Posterior vena cava (tissue), 2 donors: ENCODE measurements at regions of chr5 and their contacts with region 1.

Region 1: DNA sequence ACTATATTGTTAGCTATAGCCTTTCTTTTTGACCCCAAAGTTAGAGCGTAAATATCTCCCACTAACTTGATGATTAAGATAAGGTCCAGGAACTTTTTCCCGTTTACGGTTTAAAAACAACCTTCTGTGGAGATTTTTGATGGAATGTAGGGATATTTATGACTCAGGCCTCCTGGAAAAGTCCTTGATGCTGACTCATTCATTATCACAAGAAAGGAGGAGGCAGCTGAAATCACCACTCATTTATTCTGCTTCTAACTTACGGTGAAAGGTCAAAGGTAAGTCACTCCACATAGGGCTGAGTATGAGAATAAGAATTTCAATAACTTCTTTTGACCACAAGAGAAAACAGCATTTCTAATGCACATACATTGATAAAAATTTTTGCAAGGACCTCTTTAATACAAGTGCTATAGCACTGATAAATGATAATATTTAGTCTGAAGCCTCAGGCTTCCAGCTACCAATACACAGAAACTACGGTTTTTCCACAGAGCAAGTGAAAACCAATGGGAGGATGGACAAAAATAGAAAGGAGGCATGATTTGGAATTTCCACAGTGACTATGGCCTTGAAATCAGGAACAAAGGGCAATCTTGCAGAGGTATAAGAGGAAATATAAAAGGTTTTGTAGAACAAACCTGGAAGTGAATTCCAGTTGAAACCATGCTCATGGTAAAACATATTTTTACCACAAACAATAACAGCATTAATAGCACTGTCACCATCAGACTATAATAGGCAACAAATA is 146.5 kb downstream of the PPP2R2B start:
- DNase-seq: no peak

Region 2: GRCh38 chr5:146620669-146621051 is 111.4 kb before region 1 on chr5:
- intact Hi-C with region 1: no loop called
- DNase-seq: no peak

Region 3: GRCh38 chr5:146667633-146668272 is 64.3 kb before region 1 on chr5:
- intact Hi-C with region 1: no loop called
- DNase-seq: no peak

Region 4: DNA sequence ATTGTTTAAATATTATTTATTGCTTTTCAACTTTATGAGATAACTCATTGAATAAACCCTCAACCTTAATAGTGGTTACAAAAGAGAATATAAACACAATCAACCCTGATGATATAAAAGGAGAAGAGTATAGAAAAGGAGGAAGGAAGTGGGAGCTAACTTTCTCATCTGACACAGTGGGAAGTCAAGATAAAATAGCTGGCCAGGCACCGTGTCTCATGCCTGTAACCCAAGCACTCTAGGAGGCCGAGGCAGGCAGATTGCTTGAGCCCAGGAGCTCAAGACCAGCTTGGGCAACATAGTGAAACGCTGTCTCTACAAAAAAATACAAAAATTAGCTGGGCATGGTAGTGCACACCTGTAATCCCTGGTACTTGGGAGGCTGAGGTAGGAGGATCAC is 53.0 kb after region 1 on chr5:
- intact Hi-C with region 1: loop called in 1 of 2 experiments (anchors 10 kb)
- DNase-seq: no peak

Region 5: DNA sequence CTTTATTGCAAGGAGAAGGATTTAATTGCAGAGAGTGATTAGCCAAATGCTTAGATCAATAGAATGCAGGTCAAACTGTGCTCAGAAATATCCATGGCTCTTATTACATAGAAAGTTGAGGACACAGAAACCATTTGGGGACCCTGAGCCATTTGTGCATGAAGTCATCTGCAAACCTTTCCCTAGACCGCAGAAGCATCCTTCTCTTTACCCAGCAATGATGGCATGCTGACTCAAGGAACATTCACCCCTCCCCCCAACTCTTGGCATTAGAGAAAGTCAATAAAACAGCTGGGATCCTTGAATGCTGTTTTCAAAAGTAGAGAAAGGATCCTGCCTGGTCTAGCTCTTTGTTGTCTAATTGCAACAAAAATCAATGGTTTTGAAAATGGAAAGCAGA is 73.0 kb after region 1 on chr5:
- intact Hi-C with region 1: no loop called
- DNase-seq: no peak

Region 6: GRCh38 chr5:146947181-146947941 is 215.3 kb after region 1 on chr5:
- intact Hi-C with region 1: no loop called
- DNase-seq: no peak

Region 7: GRCh38 chr5:148333262-148333844 is 1601.3 kb after region 1 on chr5:
- intact Hi-C with region 1: loop called in 1 of 2 experiments (anchors 10 kb)
- DNase-seq: no peak